MCF 10A (cell line): ENCODE measurements at regions of chr6 and their contacts with region 1.

Region 1: GRCh38 chr6:130760006-130760405 is 67.2 kb upstream of the SMLR1 start:
- DNase-seq: peak; percentile 67
- H3K4me3 Mint-ChIP-seq: no peak overlapping the region
- H3K27ac Mint-ChIP-seq: no peak overlapping the region
- H3K4me1 Mint-ChIP-seq: no peaks in the 10 kb centered on the region
- H3K27me3 Mint-ChIP-seq: peaks cover 51% of the 10 kb centered on the region
- CTCF ChIP-seq: peak; percentile 57

Region 2: DNA sequence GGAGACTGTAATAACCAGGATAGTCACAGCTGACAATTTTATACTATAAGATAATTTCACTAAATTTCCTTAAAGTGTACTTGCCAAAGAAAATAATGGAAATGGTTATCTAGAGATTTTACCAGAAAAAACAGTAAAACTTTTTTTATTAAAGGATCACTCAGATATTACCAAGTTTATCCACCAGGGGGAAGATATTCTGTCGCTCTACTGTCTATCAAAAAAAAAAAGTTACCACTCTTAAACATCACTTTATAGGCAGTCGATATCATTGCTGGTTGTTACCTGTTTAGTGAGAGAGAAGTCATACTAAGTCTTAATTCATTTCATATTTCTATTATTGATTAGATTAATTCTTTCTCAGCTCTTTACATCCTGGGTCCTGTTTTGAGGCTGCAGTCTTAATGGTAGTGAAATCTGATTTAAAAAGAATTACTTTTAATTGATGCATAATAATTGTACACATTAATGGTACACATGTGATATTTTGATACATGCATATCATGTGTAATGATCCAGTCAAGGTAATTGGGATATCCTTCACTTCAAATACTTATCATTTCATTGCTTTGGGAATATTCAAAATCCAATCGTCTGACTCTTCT is 722.7 kb before region 1 on chr6:
- CTCF ChIA-PET with region 1: no interaction called
- POLR2A ChIA-PET with region 1: no interaction called
- intact Hi-C with region 1: loop called (anchors 1 kb)
- DNase-seq: peak; percentile 28
- H3K4me3 Mint-ChIP-seq: no peak overlapping the region
- H3K27ac Mint-ChIP-seq: no peak overlapping the region
- H3K4me1 Mint-ChIP-seq: peaks cover 7% of the 10 kb centered on the region
- H3K27me3 Mint-ChIP-seq: no peaks in the 10 kb centered on the region
- CTCF ChIP-seq: peak; percentile 47

Region 3: GRCh38 chr6:130293800-130294199 is 466.2 kb before region 1 on chr6:
- CTCF ChIA-PET with region 1: interaction called, 5 read pairs
- POLR2A ChIA-PET with region 1: no interaction called
- intact Hi-C with region 1: loop called (anchors 1 kb)
- DNase-seq: peak; percentile 66
- H3K4me3 Mint-ChIP-seq: no peak overlapping the region
- H3K27ac Mint-ChIP-seq: no peak overlapping the region
- H3K4me1 Mint-ChIP-seq: no peaks in the 10 kb centered on the region
- H3K27me3 Mint-ChIP-seq: peaks cover 7% of the 10 kb centered on the region
- CTCF ChIP-seq: peak; percentile 46

Region 4: GRCh38 chr6:130322673-130323268 is 437.2 kb before region 1 on chr6:
- CTCF ChIA-PET with region 1: interaction called, 7 read pairs
- POLR2A ChIA-PET with region 1: no interaction called
- intact Hi-C with region 1: loop called (anchors 1 kb)
- DNase-seq: peak; percentile 64
- H3K4me3 Mint-ChIP-seq: no peak overlapping the region
- H3K27ac Mint-ChIP-seq: no peak overlapping the region
- H3K4me1 Mint-ChIP-seq: peaks cover 9% of the 10 kb centered on the region
- H3K27me3 Mint-ChIP-seq: peaks cover 24% of the 10 kb centered on the region
- CTCF ChIP-seq: peak; percentile 78